Activated CD8-positive, alpha-beta memory T cell treated with anti-CD3 and anti-CD28 coated beads, Interleukin-2, amount 10 ng/mL, durations not matched to agents 7 days and 5 days (primary cell): ENCODE measurements at regions of chr6 and their contacts with region 1.

Region 1: DNA sequence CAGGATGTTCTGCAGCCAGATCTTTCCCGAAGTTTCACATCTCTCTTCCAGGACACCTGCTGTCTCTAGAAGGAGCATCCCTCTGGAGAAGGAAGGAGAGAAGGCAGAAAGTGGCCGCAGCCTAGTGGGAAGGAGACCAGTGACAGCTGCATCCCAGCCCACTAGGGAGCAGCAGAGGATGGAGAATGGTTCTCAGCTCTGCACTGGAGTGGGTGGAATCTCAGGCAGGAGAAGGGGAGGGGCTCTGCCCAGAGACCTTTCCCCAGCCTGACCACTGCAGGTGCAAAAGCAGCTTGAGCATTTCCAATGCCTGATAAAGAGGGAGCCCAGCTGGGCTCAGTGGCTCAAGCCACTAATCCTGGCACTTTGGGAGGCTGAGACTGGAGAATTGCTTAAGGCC is 32.3 kb downstream of the NCR2 start:
- DNase-seq: no peak
- ATAC-seq: no peak
- H3K4me3 Mint-ChIP-seq: no peak overlapping the region
- H3K27ac Mint-ChIP-seq: no peak overlapping the region
- H3K4me1 Mint-ChIP-seq: peaks cover 21% of the 10 kb centered on the region
- H3K27me3 Mint-ChIP-seq: peaks cover 83% of the 10 kb centered on the region

Region 2: GRCh38 chr6:41306187-41306854 is 61.4 kb before region 1 on chr6:
- CTCF ChIA-PET with region 1: interaction called, 73 read pairs
- DNase-seq: peak; percentile 61
- ATAC-seq: no peak
- H3K4me3 Mint-ChIP-seq: no peak overlapping the region
- H3K27ac Mint-ChIP-seq: no peak overlapping the region
- H3K4me1 Mint-ChIP-seq: peaks cover 2% of the 10 kb centered on the region
- H3K27me3 Mint-ChIP-seq: peaks cover 46% of the 10 kb centered on the region

Region 3: GRCh38 chr6:41318654-41319565 is 48.8 kb before region 1 on chr6:
- CTCF ChIA-PET with region 1: interaction called, 35 read pairs
- DNase-seq: peak; percentile 89
- ATAC-seq: peak; percentile 98
- H3K4me3 Mint-ChIP-seq: peak overlapping the region; percentile 41
- H3K27ac Mint-ChIP-seq: peak overlapping the region; percentile 79
- H3K4me1 Mint-ChIP-seq: peaks cover 21% of the 10 kb centered on the region
- H3K27me3 Mint-ChIP-seq: peaks cover 39% of the 10 kb centered on the region

Region 4: GRCh38 chr6:41334482-41335040 is 33.1 kb before region 1 on chr6:
- CTCF ChIA-PET with region 1: interaction called, 60 read pairs
- DNase-seq: no peak
- ATAC-seq: no peak
- H3K4me3 Mint-ChIP-seq: no peak overlapping the region
- H3K27ac Mint-ChIP-seq: peak overlapping the region; percentile 88
- H3K4me1 Mint-ChIP-seq: peaks cover 59% of the 10 kb centered on the region
- H3K27me3 Mint-ChIP-seq: no peaks in the 10 kb centered on the region

Region 5: DNA sequence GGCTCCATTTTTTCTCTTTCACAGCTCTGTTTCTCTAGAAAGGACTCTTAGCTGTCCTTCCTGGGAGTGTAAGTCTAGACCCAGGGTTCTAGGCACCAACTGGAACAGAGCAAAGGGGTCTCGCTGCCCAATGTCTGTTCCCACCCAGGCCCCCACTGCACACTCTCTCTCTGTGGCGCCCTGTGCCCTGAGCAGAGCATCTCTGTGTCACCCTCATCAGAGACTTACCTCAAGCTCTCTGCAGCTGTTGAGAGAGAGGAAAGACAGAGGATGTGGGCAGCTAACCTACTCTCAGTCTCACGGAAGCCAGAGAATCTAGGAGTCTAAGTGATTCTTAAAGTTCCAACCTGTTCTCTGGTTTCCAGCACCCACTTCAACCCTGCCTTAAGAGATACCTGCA is 22.8 kb before region 1 on chr6:
- CTCF ChIA-PET with region 1: interaction called, 26 read pairs
- DNase-seq: peak; percentile 84
- ATAC-seq: peak; percentile 99
- H3K4me3 Mint-ChIP-seq: peak overlapping the region; percentile 60
- H3K27ac Mint-ChIP-seq: peak overlapping the region; percentile 96
- H3K4me1 Mint-ChIP-seq: peaks cover 58% of the 10 kb centered on the region
- H3K27me3 Mint-ChIP-seq: peaks cover 10% of the 10 kb centered on the region

Region 6: DNA sequence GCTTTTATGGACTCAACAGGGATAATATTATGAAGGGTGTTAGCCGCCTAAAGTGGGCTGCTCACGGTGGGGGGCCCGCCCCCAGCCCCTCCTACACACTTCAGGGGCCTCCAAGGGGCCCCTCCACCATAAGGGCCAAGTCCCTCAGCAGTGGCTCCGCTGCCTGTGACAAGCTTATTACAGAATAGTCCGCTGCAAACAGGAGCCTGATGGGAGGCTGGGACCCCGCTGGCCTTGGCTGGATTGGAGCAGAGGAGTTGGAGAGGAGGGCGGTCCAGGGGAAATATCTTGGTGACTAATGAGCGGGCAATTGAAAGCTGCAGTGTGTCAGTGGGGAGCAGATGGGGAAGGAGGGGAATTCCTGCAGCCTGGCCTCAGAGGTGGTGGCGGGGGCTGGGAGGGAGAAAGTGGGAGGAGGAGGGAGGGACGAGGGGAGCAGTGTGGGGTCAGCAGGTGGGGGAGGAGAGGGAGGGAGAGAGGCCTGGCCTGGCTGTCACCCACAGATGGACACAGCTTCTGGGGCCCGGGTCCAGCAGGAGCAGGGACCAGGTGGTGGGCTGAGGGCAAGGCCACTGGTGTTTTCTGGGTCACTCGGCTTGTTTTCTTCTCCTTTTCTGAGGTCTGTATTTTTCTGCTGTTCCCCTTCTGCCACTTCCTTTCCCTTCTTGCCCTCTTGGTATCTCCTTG is 120.9 kb after region 1 on chr6:
- CTCF ChIA-PET with region 1: no interaction called
- DNase-seq: no peak
- ATAC-seq: no peak
- H3K4me3 Mint-ChIP-seq: no peak overlapping the region
- H3K27ac Mint-ChIP-seq: no peak overlapping the region
- H3K4me1 Mint-ChIP-seq: no peaks in the 10 kb centered on the region
- H3K27me3 Mint-ChIP-seq: peaks cover 51% of the 10 kb centered on the region

Region 7: GRCh38 chr6:41591859-41592502 is 224.3 kb after region 1 on chr6:
- CTCF ChIA-PET with region 1: interaction called, 11 read pairs
- DNase-seq: peak; percentile 82
- ATAC-seq: peak; percentile 54
- H3K4me3 Mint-ChIP-seq: no peak overlapping the region
- H3K27ac Mint-ChIP-seq: no peak overlapping the region
- H3K4me1 Mint-ChIP-seq: no peaks in the 10 kb centered on the region
- H3K27me3 Mint-ChIP-seq: no peaks in the 10 kb centered on the region

Region 8: GRCh38 chr6:41683510-41684310 is 316.0 kb after region 1 on chr6:
- CTCF ChIA-PET with region 1: interaction called, 33 read pairs
- DNase-seq: peak; percentile 82
- ATAC-seq: peak; percentile 95
- H3K4me3 Mint-ChIP-seq: peak overlapping the region; percentile 46
- H3K27ac Mint-ChIP-seq: peak overlapping the region; percentile 68
- H3K4me1 Mint-ChIP-seq: peaks cover 6% of the 10 kb centered on the region
- H3K27me3 Mint-ChIP-seq: peaks cover 4% of the 10 kb centered on the region

Region 9: DNA sequence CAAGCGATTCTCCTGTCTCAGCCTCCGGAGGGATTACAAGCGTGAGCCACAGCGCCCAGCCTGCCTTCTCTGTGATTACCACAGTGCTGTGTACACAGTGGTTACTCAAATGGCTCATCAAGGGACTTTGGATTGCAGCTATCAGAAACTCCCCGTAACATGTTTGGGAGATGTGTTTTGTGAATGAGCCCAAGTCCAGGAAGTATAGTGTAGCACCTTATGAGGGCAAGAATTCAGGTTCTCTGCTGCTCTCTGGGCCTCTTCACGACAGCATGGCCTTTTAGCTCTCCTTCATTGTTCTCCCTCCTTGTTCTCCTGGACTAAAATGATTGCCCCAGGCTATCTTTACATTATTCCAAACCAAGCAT is 1477.6 kb after region 1 on chr6:
- CTCF ChIA-PET with region 1: no interaction called
- DNase-seq: no peak
- ATAC-seq: no peak
- H3K4me3 Mint-ChIP-seq: no peak overlapping the region
- H3K27ac Mint-ChIP-seq: no peak overlapping the region
- H3K4me1 Mint-ChIP-seq: peaks cover 4% of the 10 kb centered on the region
- H3K27me3 Mint-ChIP-seq: no peaks in the 10 kb centered on the region